ENCODE measurements at regions of chr3 and their contacts with region 1.

Region 1: GRCh38 chr3:112293368-112294321 is at the start of gene SLC9C1:
- DNase-seq: peak; percentile 57
- ATAC-seq: peak; percentile 69
- H3K4me3 Mint-ChIP-seq: peak within 1 kb of the TSS; percentile 41
- H3K27ac Mint-ChIP-seq: no peak within 1 kb of the TSS
- H3K4me1 Mint-ChIP-seq: peaks cover 22% of the 10 kb centered on the region
- H3K27me3 Mint-ChIP-seq: no peaks in the 10 kb centered on the region
- CTCF ChIP-seq: peak; percentile 54
- total RNA-seq, gene SLC9C1: not detected

Region 2: DNA sequence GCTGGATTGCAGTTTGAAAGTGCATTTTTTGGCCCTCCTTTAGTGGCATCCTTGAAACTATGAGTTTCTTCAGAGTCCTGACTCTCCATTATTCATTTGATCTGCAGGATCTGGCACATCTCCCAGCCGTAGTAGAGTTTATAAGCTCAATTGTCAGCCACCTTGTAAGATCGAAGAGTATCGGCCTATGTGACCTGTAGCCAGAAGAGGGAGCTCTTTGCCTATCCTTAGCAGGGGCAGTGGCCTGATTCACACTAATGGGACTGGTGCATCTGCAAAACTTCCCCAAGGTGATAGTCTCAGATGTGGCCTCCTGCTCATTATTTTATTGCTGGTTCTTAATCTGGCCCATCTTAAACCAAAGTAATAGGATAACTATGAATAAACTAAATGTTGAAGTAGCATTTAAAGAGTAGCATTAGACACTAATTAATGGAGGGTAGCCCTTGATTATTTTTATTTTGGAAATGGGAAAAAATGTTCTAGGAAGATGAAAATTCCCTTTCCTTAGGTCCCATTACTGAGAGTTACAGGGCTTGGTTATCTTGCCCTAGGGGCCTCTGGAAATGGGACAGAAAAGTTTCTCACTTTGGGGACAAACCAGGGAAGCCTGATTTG is 181.8 kb before region 1 on chr3:
- CTCF ChIA-PET with region 1: interaction called, 22 read pairs
- POLR2A ChIA-PET with region 1: no interaction called
- intact Hi-C with region 1: no loop called
- DNase-seq: peak; percentile 73
- ATAC-seq: peak; percentile 91
- H3K4me3 Mint-ChIP-seq: no peak overlapping the region
- H3K27ac Mint-ChIP-seq: no peak overlapping the region
- H3K4me1 Mint-ChIP-seq: peaks cover 14% of the 10 kb centered on the region
- H3K27me3 Mint-ChIP-seq: no peaks in the 10 kb centered on the region
- CTCF ChIP-seq: peak; percentile 83

Region 3: GRCh38 chr3:112187300-112187699 is 106.3 kb before region 1 on chr3:
- CTCF ChIA-PET with region 1: no interaction called
- POLR2A ChIA-PET with region 1: no interaction called
- intact Hi-C with region 1: no loop called
- DNase-seq: no peak
- ATAC-seq: no peak
- H3K4me3 Mint-ChIP-seq: no peak overlapping the region
- H3K27ac Mint-ChIP-seq: no peak overlapping the region
- H3K4me1 Mint-ChIP-seq: no peaks in the 10 kb centered on the region
- H3K27me3 Mint-ChIP-seq: peaks cover 2% of the 10 kb centered on the region
- CTCF ChIP-seq: no peak

Region 4: GRCh38 chr3:112273536-112273935 is 20.1 kb before region 1 on chr3:
- CTCF ChIA-PET with region 1: interaction called, 11 read pairs
- POLR2A ChIA-PET with region 1: no interaction called
- intact Hi-C with region 1: no loop called
- DNase-seq: no peak
- ATAC-seq: no peak
- H3K4me3 Mint-ChIP-seq: no peak overlapping the region
- H3K27ac Mint-ChIP-seq: no peak overlapping the region
- H3K4me1 Mint-ChIP-seq: no peaks in the 10 kb centered on the region
- H3K27me3 Mint-ChIP-seq: peaks cover 5% of the 10 kb centered on the region
- CTCF ChIP-seq: no peak

Region 5: GRCh38 chr3:112321867-112322649 is 28.4 kb after region 1 on chr3:
- CTCF ChIA-PET with region 1: interaction called, 15 read pairs
- POLR2A ChIA-PET with region 1: no interaction called
- intact Hi-C with region 1: no loop called
- DNase-seq: no peak
- ATAC-seq: no peak
- H3K4me3 Mint-ChIP-seq: no peak overlapping the region
- H3K27ac Mint-ChIP-seq: no peak overlapping the region
- H3K4me1 Mint-ChIP-seq: no peaks in the 10 kb centered on the region
- H3K27me3 Mint-ChIP-seq: peaks cover 3% of the 10 kb centered on the region
- CTCF ChIP-seq: no peak

Region 6: DNA sequence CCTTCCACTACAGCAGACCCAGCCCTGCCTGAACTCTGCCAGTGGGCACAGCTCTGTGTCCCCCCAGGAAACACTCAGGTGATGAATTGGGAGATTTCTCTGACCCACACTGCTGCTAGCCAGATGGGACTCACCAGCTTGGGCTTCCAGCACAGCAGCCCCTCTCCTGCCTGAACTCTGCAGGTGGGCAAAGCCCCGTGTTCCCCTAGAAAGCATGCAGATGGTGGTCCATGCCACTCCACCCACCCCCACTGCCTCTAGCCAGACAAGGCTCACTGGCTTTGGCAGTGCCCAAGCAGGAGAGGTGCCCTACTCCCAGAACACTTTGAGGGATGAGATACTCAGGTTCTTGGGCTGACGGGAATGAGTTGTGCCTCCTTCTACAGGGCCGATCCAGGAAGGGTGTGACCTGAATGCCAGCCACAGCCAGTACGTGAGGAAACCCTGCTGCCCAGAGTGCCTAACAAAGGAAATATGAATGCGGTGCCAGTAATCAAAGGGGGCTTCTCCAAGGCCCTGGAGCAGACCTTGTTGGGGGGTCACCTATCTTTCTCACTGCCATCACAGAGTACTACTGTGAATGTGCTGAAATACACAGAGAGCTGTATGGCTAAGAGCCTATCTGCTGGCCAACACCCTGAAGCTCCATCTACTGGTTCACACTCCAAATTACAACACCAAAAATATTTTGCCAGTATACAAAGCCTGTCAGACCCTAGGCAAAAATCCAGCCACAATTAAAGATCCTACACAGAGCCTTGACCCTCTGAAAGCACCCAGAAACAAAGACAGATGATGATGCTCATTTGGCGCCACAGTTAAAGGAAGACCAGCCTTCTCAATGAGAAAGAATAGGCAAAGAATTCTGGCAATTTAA is 143.7 kb after region 1 on chr3:
- CTCF ChIA-PET with region 1: interaction called, 12 read pairs
- POLR2A ChIA-PET with region 1: no interaction called
- intact Hi-C with region 1: no loop called
- DNase-seq: no peak
- ATAC-seq: peak; percentile 93
- H3K4me3 Mint-ChIP-seq: no peak overlapping the region
- H3K27ac Mint-ChIP-seq: peak overlapping the region; percentile 46
- H3K4me1 Mint-ChIP-seq: peaks cover 36% of the 10 kb centered on the region
- H3K27me3 Mint-ChIP-seq: no peaks in the 10 kb centered on the region
- CTCF ChIP-seq: peak; percentile 32

Region 7: GRCh38 chr3:112531358-112531781 is 237.7 kb after region 1 on chr3:
- CTCF ChIA-PET with region 1: interaction called, 18 read pairs
- POLR2A ChIA-PET with region 1: no interaction called
- intact Hi-C with region 1: no loop called
- DNase-seq: no peak
- ATAC-seq: peak; percentile 45
- H3K4me3 Mint-ChIP-seq: no peak overlapping the region
- H3K27ac Mint-ChIP-seq: no peak overlapping the region
- H3K4me1 Mint-ChIP-seq: peaks cover 5% of the 10 kb centered on the region
- H3K27me3 Mint-ChIP-seq: no peaks in the 10 kb centered on the region
- CTCF ChIP-seq: peak; percentile 57